T-cell (primary cell): ENCODE measurements at regions of chr14 and their contacts with region 1.

Region 1: DNA sequence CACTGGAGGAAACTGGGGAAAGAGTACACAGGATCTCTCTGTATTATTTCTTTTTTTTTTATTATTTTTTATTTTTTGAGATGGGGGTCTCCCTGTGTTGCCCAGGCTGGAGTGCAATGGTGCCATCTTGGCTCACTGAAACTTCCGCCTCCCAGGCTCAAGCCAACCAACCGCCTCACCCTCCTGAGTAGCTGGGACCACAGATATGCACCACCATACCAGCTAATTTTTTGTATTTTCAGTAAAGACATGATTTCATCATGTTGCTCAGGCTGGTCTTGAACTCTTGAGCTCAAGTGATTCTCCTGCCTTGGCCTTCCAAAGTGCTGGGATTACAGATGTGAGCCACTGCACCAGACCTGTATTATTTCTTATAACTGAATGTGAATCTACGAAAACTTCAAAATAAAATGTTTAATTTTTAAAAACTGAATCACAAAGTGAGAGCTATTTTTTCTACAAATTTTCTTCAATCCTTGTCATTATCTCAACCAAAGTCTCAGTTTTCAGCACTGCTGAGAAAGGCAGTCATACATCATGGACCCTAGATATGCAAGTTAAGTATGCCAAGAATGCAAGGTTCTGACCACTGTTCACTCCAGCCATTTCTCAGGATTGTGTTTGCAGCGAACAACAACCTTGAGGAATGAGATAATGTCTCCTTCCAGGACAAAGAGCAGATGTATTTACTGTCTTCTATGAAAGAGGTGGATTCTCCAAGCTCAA is 2.4 kb downstream of the EAPP start:
- DNase-seq: no peak
- ATAC-seq: no peak
- H3K4me3 ChIP-seq: no peak overlapping the region
- H3K4me3 Mint-ChIP-seq: peak overlapping the region in 2 of 3 donors; percentile 28 to 99
- H3K27ac ChIP-seq: no peak overlapping the region
- H3K27ac Mint-ChIP-seq: no peak overlapping the region
- H3K4me1 ChIP-seq: peaks cover 18 to 32% of the 10 kb centered on the region in 2 experiments
- H3K4me1 Mint-ChIP-seq: peaks cover 41 to 47% (median 42%) of the 10 kb centered on the region in 3 donors
- H3K27me3 ChIP-seq: no peaks in the 10 kb centered on the region
- H3K27me3 Mint-ChIP-seq: no peaks in the 10 kb centered on the region

Region 2: GRCh38 chr14:34507459-34507858 is 29.7 kb before region 1 on chr14:
- CTCF ChIA-PET with region 1: no interaction called
- POLR2A ChIA-PET with region 1: interaction called in 1 of 2 experiments, 10 read pairs
- DNase-seq: no peak
- ATAC-seq: no peak
- H3K4me3 ChIP-seq: no peak overlapping the region
- H3K4me3 Mint-ChIP-seq: no peak overlapping the region
- H3K27ac ChIP-seq: no peak overlapping the region
- H3K27ac Mint-ChIP-seq: no peak overlapping the region
- H3K4me1 ChIP-seq: no peaks in the 10 kb centered on the region
- H3K4me1 Mint-ChIP-seq: no peaks in the 10 kb centered on the region
- H3K27me3 ChIP-seq: no peaks in the 10 kb centered on the region
- H3K27me3 Mint-ChIP-seq: no peaks in the 10 kb centered on the region

Region 3: GRCh38 chr14:34522496-34522895 is 14.6 kb before region 1 on chr14:
- CTCF ChIA-PET with region 1: interaction called in 1 of 2 experiments, 3 read pairs
- POLR2A ChIA-PET with region 1: interaction called, 3 to 10 read pairs
- DNase-seq: no peak
- ATAC-seq: no peak
- H3K4me3 ChIP-seq: no peak overlapping the region
- H3K4me3 Mint-ChIP-seq: no peak overlapping the region
- H3K27ac ChIP-seq: no peak overlapping the region
- H3K27ac Mint-ChIP-seq: peak overlapping the region in 1 of 2 donors; percentile 2
- H3K4me1 ChIP-seq: no peaks in the 10 kb centered on the region
- H3K4me1 Mint-ChIP-seq: peaks cover 0 to 5% (median 0%) of the 10 kb centered on the region in 3 donors
- H3K27me3 ChIP-seq: no peaks in the 10 kb centered on the region
- H3K27me3 Mint-ChIP-seq: no peaks in the 10 kb centered on the region

Region 4: DNA sequence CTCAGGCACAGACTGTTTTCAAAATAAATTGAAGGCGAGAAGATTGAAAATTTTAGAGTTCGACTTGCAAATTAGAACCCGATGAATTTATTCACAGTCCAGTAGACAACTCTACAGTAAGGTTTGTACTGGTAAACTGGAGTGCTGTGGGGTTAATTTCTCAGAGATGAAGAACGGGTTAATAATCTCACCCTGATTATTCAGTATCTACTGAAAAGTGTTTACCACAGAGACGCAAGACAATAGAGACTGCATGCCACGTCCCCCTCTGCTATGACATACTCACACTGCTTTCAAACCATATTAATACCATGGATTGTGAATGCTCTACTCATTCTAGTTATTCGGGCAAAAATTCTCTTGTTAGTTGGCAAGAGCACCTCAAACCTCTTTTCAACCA is 141.2 kb after region 1 on chr14:
- CTCF ChIA-PET with region 1: no interaction called
- POLR2A ChIA-PET with region 1: no interaction called
- DNase-seq: no peak
- ATAC-seq: no peak
- H3K4me3 ChIP-seq: no peak overlapping the region
- H3K4me3 Mint-ChIP-seq: no peak overlapping the region
- H3K27ac ChIP-seq: no peak overlapping the region
- H3K27ac Mint-ChIP-seq: no peak overlapping the region
- H3K4me1 ChIP-seq: peaks cover 2 to 3% of the 10 kb centered on the region in 2 experiments
- H3K4me1 Mint-ChIP-seq: peaks cover 0 to 7% (median 5%) of the 10 kb centered on the region in 3 donors
- H3K27me3 ChIP-seq: no peaks in the 10 kb centered on the region
- H3K27me3 Mint-ChIP-seq: no peaks in the 10 kb centered on the region

Region 5: DNA sequence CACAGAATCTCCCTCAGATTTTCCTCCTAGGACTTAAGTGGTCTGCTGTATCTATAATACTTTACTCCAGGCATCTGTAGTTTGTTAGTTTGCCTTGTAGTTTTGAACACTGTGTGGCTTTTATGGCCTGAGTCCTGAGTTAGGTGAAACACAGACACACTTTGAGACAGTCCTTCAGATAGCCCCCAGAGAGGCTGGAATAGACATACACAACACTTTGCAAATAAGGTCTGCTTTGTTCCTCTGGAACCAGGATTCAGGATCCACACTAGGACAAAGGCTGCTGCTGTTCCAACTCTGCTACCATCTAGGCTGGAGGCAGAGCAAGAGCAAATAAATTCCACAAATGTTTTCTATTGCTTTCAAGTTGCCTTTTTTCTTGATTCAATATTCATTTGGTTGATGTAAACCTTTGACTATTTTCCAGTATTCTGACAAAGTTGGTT is 955.5 kb after region 1 on chr14:
- CTCF ChIA-PET with region 1: no interaction called
- POLR2A ChIA-PET with region 1: no interaction called
- DNase-seq: no peak
- ATAC-seq: no peak
- H3K4me3 ChIP-seq: no peak overlapping the region
- H3K4me3 Mint-ChIP-seq: no peak overlapping the region
- H3K27ac ChIP-seq: no peak overlapping the region
- H3K27ac Mint-ChIP-seq: no peak overlapping the region
- H3K4me1 ChIP-seq: no peaks in the 10 kb centered on the region
- H3K4me1 Mint-ChIP-seq: no peaks in the 10 kb centered on the region
- H3K27me3 ChIP-seq: peaks cover 0 to 35% of the 10 kb centered on the region in 2 experiments
- H3K27me3 Mint-ChIP-seq: peaks cover 29 to 34% of the 10 kb centered on the region in 2 donors